GM23248 (cell line): ENCODE measurements at regions of chr11 and their contacts with region 1.

Region 1: GRCh38 chr11:2433106-2433925 is 11.0 kb downstream of the TRPM5 start:
- DNase-seq: no peak
- H3K4me3 ChIP-seq: no peak overlapping the region
- H3K27ac ChIP-seq: no peak overlapping the region
- H3K4me1 ChIP-seq: no peaks in the 10 kb centered on the region
- H3K27me3 ChIP-seq: peaks cover 12% of the 10 kb centered on the region; the same call in 1 of the 2 replicates

Region 2: DNA sequence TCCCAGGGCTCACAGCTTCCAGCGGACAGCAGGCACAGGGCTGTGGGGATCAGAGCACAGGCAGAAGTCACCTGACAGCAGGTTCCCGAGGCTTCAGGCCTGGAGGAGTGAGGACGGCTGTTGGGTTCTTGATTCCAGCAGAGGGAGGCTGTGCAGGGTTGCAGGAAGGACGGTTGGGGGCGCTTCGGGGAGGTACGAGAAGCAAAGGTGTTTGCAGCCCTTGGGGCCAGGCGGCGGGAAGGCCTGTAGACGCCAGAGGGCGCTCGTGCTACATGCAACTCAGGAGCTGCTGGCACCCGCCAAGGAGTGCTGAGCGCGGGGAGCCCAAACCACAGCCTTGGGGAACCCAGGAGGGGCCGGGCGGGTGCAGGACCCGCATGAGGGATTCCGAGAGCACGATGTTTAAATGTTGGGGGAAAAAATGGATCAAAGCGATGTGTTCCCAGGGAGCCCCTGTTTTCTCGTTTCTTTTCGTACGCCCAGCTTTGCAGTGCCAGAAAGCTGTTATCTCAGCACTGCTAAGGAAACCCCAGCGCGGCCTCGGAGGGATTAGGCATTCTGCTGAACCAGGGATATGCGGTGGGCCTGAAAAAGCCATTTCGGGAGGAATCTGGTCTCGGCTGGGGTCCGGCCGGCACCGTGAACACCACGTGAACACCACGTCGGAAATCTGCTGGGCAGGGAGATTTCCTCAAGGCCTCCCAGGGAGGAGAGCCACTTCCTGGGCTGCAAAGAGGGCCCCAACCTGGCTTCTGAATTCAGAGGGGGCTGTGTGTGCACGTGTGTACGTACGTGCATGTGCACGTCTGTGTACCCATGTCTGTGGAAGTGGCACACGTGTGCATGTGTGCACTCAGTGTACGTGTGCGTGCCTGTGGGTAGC is 99.6 kb after region 1 on chr11:
- in situ Hi-C with region 1: loop called (anchors 5 kb)
- DNase-seq: peak; percentile 89
- H3K4me3 ChIP-seq: peak overlapping the region; percentile 40
- H3K27ac ChIP-seq: no peak overlapping the region
- H3K4me1 ChIP-seq: peaks cover 9% of the 10 kb centered on the region
- H3K27me3 ChIP-seq: peaks cover 4% of the 10 kb centered on the region; the same call in 1 of the 2 replicates

Region 3: GRCh38 chr11:2559527-2560311 is 126.4 kb after region 1 on chr11:
- in situ Hi-C with region 1: no loop called
- DNase-seq: no peak
- H3K4me3 ChIP-seq: no peak overlapping the region
- H3K27ac ChIP-seq: no peak overlapping the region
- H3K4me1 ChIP-seq: no peaks in the 10 kb centered on the region
- H3K27me3 ChIP-seq: peaks cover 19% of the 10 kb centered on the region; the same call in 1 of the 2 replicates

Region 4: GRCh38 chr11:2892215-2893020 is 459.1 kb after region 1 on chr11:
- in situ Hi-C with region 1: loop called (anchors 10 kb)
- DNase-seq: peak; percentile 55
- H3K4me3 ChIP-seq: peak overlapping the region; percentile 68
- H3K27ac ChIP-seq: no peak overlapping the region
- H3K4me1 ChIP-seq: 0 out of 2 replicates have a peak, but pooled peaks cover 6% of the 10 kb centered on the region
- H3K27me3 ChIP-seq: no peaks in the 10 kb centered on the region